ENCODE measurements at regions of chr12 and their contacts with region 1.

Region 1: DNA sequence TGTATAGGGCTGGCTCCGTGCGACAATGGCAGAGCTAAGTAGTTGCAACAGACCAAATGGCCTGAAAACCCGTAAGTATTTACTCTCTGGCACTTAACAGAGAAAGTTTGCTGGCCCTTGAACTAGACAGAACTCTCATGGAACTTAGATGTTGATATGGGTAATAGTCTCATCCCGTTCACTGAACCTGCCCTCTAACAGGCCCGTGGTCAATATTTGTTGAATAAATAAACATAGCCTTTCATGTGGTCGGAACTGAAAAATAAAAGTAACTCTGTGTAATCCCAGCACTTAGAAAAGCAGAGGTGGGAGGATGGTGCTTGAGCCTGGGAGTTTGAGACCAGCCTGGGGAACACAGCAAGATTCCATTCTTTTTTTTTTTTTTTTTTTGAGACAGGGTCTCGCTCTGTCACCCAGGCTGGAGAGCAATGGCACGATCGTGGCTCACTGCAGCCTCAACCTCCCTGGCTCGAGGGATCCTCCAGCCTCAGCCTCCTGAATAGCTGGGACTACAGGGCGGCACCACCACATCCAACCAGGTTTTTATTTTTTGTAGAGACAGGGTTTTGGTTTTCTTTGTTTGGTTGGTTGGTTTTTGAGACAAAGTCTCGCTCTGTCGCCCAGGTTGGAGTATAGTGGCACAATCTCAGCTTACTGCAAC is 29.7 kb downstream of the KDM2B start:
- DNase-seq: no peak
- ATAC-seq: no peak

Region 2: GRCh38 chr12:121452340-121452984 is 98.6 kb before region 1 on chr12:
- intact Hi-C with region 1: no loop called
- DNase-seq: no peak
- ATAC-seq: peak; percentile 63

Region 3: GRCh38 chr12:121626087-121626852 is 75.2 kb after region 1 on chr12 and contains the start of gene ORAI1:
- intact Hi-C with region 1: loop called (anchors 2 kb)
- DNase-seq: peak; percentile 98
- ATAC-seq: peak; percentile 86
- total RNA-seq, gene ORAI1: 14.0 TPM

Region 4: GRCh38 chr12:121668750-121669520 is 117.8 kb after region 1 on chr12:
- intact Hi-C with region 1: loop called (anchors 5 kb)
- DNase-seq: no peak
- ATAC-seq: no peak

Region 5: GRCh38 chr12:121678716-121679580 is 127.8 kb after region 1 on chr12:
- intact Hi-C with region 1: loop called (anchors 5 kb)
- DNase-seq: no peak
- ATAC-seq: no peak

Region 6: GRCh38 chr12:122669397-122670070 is 1118.4 kb after region 1 on chr12:
- intact Hi-C with region 1: no loop called
- DNase-seq: no peak
- ATAC-seq: peak; percentile 60